A673 (cell line): ENCODE measurements at regions of chr17 and their contacts with region 1.

Region 1: GRCh38 chr17:72030067-72030899 is 90.5 kb upstream of the SOX9 start:
- DNase-seq: peak; percentile 97
- H3K4me3 ChIP-seq: peak overlapping the region; percentile 43
- H3K27ac ChIP-seq: peak overlapping the region; percentile 81
- H3K4me1 ChIP-seq: peaks cover 32% of the 10 kb centered on the region
- H3K27me3 ChIP-seq: no peaks in the 10 kb centered on the region
- CTCF ChIP-seq: peak; percentile 61

Region 2: GRCh38 chr17:71980171-71980570 is 50.1 kb before region 1 on chr17:
- CTCF ChIA-PET with region 1: no interaction called
- POLR2A ChIA-PET with region 1: interaction called, 12 read pairs
- intact Hi-C with region 1: no loop called
- DNase-seq: no peak
- H3K4me3 ChIP-seq: no peak overlapping the region
- H3K27ac ChIP-seq: no peak overlapping the region
- H3K4me1 ChIP-seq: no peaks in the 10 kb centered on the region
- H3K27me3 ChIP-seq: no peaks in the 10 kb centered on the region
- CTCF ChIP-seq: no peak

Region 3: DNA sequence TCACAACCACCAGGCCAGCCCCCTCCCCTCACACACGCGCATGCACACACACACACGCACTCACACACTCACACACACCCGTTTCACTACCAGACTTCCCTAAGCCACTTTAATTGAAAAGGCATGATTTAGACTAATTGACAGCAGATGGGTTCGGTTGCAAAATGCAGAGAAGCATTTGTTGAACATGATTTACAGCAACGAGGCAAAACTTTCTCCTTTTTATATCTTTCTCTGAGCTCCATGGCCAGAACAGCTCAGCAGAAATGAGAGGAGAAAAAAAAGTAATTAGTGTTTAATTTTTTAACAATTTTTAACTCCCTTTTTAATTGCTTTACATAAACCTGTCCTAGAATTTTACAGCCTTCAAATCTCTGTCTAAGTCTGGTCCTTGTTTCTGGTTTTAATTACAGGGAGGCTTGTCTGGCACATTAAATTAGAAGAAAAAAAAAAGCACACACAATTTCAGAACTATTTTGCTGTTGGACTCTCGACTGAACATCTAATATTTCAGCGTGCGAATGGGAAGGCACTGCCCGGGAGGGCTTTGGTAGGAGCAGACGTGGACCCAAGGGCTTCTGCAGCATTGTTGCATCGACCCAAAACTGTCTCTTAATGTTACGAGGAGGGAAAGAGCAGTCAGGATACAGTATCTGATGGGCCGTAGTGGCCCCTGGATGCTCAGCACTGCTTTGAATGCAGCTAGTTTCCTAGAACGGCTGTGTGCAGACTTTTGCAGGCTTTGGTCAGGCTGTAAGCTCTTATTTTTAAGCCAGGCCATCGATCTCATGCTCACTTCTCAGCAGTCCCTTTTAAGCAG is 346.5 kb after region 1 on chr17:
- CTCF ChIA-PET with region 1: no interaction called
- POLR2A ChIA-PET with region 1: no interaction called
- intact Hi-C with region 1: no loop called
- DNase-seq: peak; percentile 90
- H3K4me3 ChIP-seq: no peak overlapping the region
- H3K27ac ChIP-seq: peak overlapping the region; percentile 84
- H3K4me1 ChIP-seq: peaks cover 78% of the 10 kb centered on the region
- H3K27me3 ChIP-seq: no peaks in the 10 kb centered on the region
- CTCF ChIP-seq: no peak

Region 4: DNA sequence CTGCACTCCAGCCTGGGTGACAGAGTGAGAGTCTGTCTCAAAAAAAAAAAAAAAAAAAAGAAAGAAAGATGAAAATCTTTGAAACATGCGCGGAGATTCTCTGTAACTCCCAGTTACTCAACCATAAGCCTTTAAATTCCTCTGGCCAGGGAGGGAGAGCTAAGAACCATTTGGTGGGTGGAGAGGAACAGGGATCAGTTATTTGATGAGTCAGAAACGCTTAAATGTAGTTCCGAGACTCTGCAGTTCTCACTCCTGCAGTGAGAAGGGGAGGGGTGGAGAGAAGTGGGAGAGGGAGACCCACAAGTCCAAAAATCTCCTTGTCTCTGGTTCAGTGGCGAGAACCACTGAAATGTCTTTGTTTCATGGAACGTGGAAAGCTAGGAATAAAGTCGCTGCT is 357.2 kb after region 1 on chr17:
- CTCF ChIA-PET with region 1: no interaction called
- POLR2A ChIA-PET with region 1: interaction called, 13 read pairs
- intact Hi-C with region 1: no loop called
- DNase-seq: peak; percentile 86
- H3K4me3 ChIP-seq: no peak overlapping the region
- H3K27ac ChIP-seq: peak overlapping the region; percentile 1
- H3K4me1 ChIP-seq: peaks cover 40% of the 10 kb centered on the region
- H3K27me3 ChIP-seq: no peaks in the 10 kb centered on the region
- CTCF ChIP-seq: no peak